ENCODE measurements at regions of chr5 and their contacts with region 1.

Region 1: DNA sequence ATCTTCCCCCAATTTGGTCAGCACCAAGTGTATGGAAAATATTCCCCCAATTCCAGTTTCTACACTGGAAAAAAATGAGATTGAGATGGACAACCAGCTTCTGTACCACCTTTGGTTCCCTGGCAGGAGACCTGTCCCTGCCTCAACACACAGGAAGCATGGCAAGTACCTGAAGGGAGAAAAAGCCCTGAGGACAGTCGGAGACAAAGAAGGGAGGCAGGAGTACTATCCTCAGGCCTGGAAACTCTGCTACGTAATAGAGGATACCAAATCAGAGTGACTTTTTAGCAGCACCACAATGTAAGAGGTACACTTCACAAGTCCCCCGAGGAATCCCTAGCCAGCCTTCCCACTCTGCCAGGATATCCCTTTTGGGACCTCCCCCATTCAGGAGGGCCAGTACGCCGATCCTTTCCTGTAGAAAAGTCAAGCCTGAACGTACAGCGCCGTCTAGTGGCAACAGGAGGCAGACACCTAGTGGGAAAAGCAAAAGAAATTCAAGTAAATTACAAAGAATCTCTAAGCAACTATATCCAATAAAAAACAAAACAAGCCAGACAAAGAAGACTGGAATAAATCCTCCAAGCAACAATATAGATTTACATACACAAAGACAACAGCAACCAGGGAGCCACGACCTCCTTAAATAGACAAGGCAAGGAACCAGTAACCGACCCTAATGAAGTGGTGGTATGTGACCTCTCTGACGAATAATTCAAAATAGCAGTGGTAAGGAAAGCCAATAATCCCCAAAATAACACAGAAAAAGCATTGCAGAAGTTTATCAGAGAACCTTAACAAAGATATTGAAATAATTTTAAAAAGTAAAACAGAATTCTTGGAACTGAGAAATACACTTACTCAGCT is 63.3 kb upstream of the SLCO6A1 start:
- DNase-seq: no peak
- ATAC-seq: peak; percentile 75
- H3K4me3 ChIP-seq: no peak overlapping the region
- H3K27ac ChIP-seq: no peak overlapping the region
- H3K4me1 ChIP-seq: no peaks in the 10 kb centered on the region
- H3K27me3 ChIP-seq: no peaks in the 10 kb centered on the region
- CTCF ChIP-seq: peak; percentile 60 to 88 (median 84)
- EP300 ChIP-seq: no peak
- POLR2A ChIP-seq: no peak
- RAD21 ChIP-seq: peak; percentile 76

Region 2: GRCh38 chr5:102450313-102450990 is 111.7 kb before region 1 on chr5:
- CTCF ChIA-PET with region 1: interaction called, 4 read pairs
- POLR2A ChIA-PET with region 1: no interaction called
- RAD21 ChIA-PET with region 1: no interaction called
- SMC1A ChIA-PET with region 1: no interaction called
- in situ Hi-C with region 1: no loop called
- intact Hi-C with region 1: loop called (anchors 2 kb)
- DNase-seq: no peak
- ATAC-seq: peak; percentile 70
- H3K4me3 ChIP-seq: no peak overlapping the region
- H3K27ac ChIP-seq: no peak overlapping the region
- H3K4me1 ChIP-seq: no peaks in the 10 kb centered on the region
- H3K27me3 ChIP-seq: no peaks in the 10 kb centered on the region
- CTCF ChIP-seq: peak; percentile 32 to 41 (median 35); a peak in 5 of 6 replicates
- EP300 ChIP-seq: no peak
- POLR2A ChIP-seq: no peak
- RAD21 ChIP-seq: peak; percentile 56

Region 3: GRCh38 chr5:102536323-102536928 is 25.7 kb before region 1 on chr5:
- CTCF ChIA-PET with region 1: interaction called, 13 read pairs
- POLR2A ChIA-PET with region 1: no interaction called
- RAD21 ChIA-PET with region 1: no interaction called
- SMC1A ChIA-PET with region 1: interaction called, 4 read pairs
- in situ Hi-C with region 1: no loop called
- intact Hi-C with region 1: no loop called
- DNase-seq: no peak
- ATAC-seq: no peak
- H3K4me3 ChIP-seq: no peak overlapping the region
- H3K27ac ChIP-seq: no peak overlapping the region
- H3K4me1 ChIP-seq: no peaks in the 10 kb centered on the region
- H3K27me3 ChIP-seq: no peaks in the 10 kb centered on the region
- CTCF ChIP-seq: peak in 1 of 3 experiments; percentile 23; a peak in 2 of 6 replicates
- EP300 ChIP-seq: no peak
- POLR2A ChIP-seq: no peak
- RAD21 ChIP-seq: peak; percentile 33; the same call in 1 of the 2 replicates

Region 4: GRCh38 chr5:102545175-102545574 is 17.0 kb before region 1 on chr5:
- CTCF ChIA-PET with region 1: interaction called, 17 read pairs
- POLR2A ChIA-PET with region 1: no interaction called
- RAD21 ChIA-PET with region 1: interaction called, 3 read pairs
- SMC1A ChIA-PET with region 1: interaction called, 3 read pairs
- in situ Hi-C with region 1: no loop called
- intact Hi-C with region 1: no loop called
- DNase-seq: no peak
- ATAC-seq: peak; percentile 91
- H3K4me3 ChIP-seq: no peak overlapping the region
- H3K27ac ChIP-seq: no peak overlapping the region
- H3K4me1 ChIP-seq: no peaks in the 10 kb centered on the region
- H3K27me3 ChIP-seq: no peaks in the 10 kb centered on the region
- CTCF ChIP-seq: peak; percentile 37 to 52 (median 45)
- EP300 ChIP-seq: no peak
- POLR2A ChIP-seq: no peak
- RAD21 ChIP-seq: peak; percentile 46

Measured in GM12878 (cell line).